Psoas muscle (tissue), 8 donors: ENCODE measurements at regions of chr1 and their contacts with region 1.

Region 1: DNA sequence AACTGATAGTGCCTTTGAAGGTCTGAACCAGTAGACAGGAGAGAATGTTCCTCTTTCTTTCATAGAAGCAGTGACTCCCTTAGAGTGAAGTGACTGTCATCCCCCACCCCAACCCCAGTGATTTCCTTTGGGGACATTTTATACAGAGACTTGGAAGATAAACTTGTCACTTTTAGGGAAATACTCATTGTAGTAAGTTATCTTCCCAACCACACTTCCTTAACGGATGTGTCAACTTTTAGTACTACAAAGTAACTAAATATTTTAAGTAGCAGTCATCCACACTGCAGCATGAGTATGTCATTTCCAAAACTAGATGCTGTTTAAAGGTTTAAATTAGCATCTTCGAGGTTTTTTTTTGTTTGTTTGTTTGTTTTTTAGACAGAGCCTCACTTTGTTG is 13.7 kb downstream of the LRRC8B start:
- DNase-seq: no peak
- ATAC-seq: peak in 2 of 4 donors; percentile 34 to 56
- H3K4me3 ChIP-seq: no peak overlapping the region
- H3K27ac ChIP-seq: peak overlapping the region; percentile 50
- H3K4me1 ChIP-seq: peaks cover 19% of the 10 kb centered on the region
- H3K27me3 ChIP-seq: no peaks in the 10 kb centered on the region
- CTCF ChIP-seq: no peak

Region 2: GRCh38 chr1:89454845-89455521 is 83.4 kb before region 1 on chr1:
- intact Hi-C with region 1: no loop called
- DNase-seq: peak in 1 of 2 donors; percentile 18
- ATAC-seq: peak in 2 of 4 donors; percentile 40 to 75
- H3K4me3 ChIP-seq: no peak overlapping the region
- H3K27ac ChIP-seq: no peak overlapping the region
- H3K4me1 ChIP-seq: no peaks in the 10 kb centered on the region
- H3K27me3 ChIP-seq: no peaks in the 10 kb centered on the region
- CTCF ChIP-seq: peak; percentile 66

Region 3: GRCh38 chr1:89578151-89578550 is 39.8 kb after region 1 on chr1:
- intact Hi-C with region 1: no loop called
- DNase-seq: no peak
- ATAC-seq: no peak
- H3K4me3 ChIP-seq: no peak overlapping the region
- H3K27ac ChIP-seq: no peak overlapping the region
- H3K4me1 ChIP-seq: no peaks in the 10 kb centered on the region
- H3K27me3 ChIP-seq: no peaks in the 10 kb centered on the region
- CTCF ChIP-seq: no peak

Region 4: GRCh38 chr1:89598450-89599331 is 60.3 kb after region 1 on chr1:
- intact Hi-C with region 1: loop called in 1 of 2 experiments (anchors 10 kb)
- DNase-seq: no peak
- ATAC-seq: peak; percentile 55 to 86 (median 67)
- H3K4me3 ChIP-seq: no peak overlapping the region
- H3K27ac ChIP-seq: no peak overlapping the region
- H3K4me1 ChIP-seq: no peaks in the 10 kb centered on the region
- H3K27me3 ChIP-seq: no peaks in the 10 kb centered on the region
- CTCF ChIP-seq: peak; percentile 73